ENCODE measurements at regions of chr19 and their contacts with region 1.

Region 1: GRCh38 chr19:29878973-29879654 is 62.9 kb upstream of the URI1 start:
- DNase-seq: no peak
- ATAC-seq: peak; percentile 33 to 73 (median 52)
- H3K4me3 ChIP-seq: no peak overlapping the region
- H3K27ac ChIP-seq: no peak overlapping the region
- H3K4me1 ChIP-seq: peaks cover 0 to 14% (median 2%) of the 10 kb centered on the region in 12 donors
- H3K27me3 ChIP-seq: peaks cover 0 to 28% (median 2%) of the 10 kb centered on the region in 9 donors
- CTCF ChIP-seq: no peak
- POLR2A ChIP-seq: no peak

Region 2: GRCh38 chr19:29735800-29736199 is 143.3 kb before region 1 on chr19:
- intact Hi-C with region 1: loop called in 3 of 10 experiments (anchors 5 to 10 kb)
- DNase-seq: no peak
- ATAC-seq: no peak
- H3K4me3 ChIP-seq: no peak overlapping the region
- H3K27ac ChIP-seq: no peak overlapping the region
- H3K4me1 ChIP-seq: peaks cover 0 to under 1% (median 0%) of the 10 kb centered on the region in 12 donors
- H3K27me3 ChIP-seq: peaks cover 0 to 36% (median 0%) of the 10 kb centered on the region in 9 donors
- CTCF ChIP-seq: no peak
- POLR2A ChIP-seq: no peak

Region 3: DNA sequence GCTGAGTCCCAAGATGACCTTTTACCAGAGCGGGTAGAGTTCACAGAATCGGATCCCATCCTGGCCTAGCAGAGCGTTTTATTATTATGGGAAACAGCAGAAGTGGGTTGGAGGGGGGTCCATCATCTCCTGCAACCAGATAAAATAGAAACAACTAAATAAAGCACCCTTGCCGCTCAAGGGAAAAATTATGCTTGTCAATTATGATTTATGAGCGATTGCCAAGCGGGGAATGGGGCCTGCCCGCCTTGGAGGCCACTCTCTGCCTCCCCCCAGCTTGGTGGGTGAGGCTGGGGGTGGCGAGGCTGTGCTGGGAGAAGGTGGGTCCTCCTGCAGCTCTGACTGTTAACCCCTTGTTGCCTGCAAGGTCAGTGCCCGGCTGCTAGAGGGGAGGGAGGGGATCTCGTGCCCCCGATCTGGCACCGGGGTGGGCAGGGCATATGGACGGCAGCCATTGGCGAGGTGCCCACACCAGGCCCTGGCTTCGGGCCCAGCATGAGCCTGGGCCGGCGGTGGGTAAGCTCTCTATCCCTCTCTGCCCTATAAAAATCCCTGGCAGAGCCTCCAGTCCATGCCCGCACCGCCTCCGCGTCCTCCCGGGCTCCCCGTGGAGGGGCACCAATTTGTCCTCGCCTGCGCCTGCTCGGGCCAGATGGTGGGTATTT is 192.0 kb after region 1 on chr19:
- intact Hi-C with region 1: no loop called
- DNase-seq: peak in 4 of 5 donors; percentile 44 to 51 (median 46)
- ATAC-seq: peak; percentile 74 to 80 (median 77)
- H3K4me3 ChIP-seq: no peak overlapping the region
- H3K27ac ChIP-seq: no peak overlapping the region
- H3K4me1 ChIP-seq: peaks cover 0 to 8% (median 0%) of the 10 kb centered on the region in 12 donors
- H3K27me3 ChIP-seq: no peaks in the 10 kb centered on the region
- CTCF ChIP-seq: no peak
- POLR2A ChIP-seq: no peak